Mucosa of descending colon (tissue), 3 donors: ENCODE measurements at regions of chr5 and their contacts with region 1.

Region 1: DNA sequence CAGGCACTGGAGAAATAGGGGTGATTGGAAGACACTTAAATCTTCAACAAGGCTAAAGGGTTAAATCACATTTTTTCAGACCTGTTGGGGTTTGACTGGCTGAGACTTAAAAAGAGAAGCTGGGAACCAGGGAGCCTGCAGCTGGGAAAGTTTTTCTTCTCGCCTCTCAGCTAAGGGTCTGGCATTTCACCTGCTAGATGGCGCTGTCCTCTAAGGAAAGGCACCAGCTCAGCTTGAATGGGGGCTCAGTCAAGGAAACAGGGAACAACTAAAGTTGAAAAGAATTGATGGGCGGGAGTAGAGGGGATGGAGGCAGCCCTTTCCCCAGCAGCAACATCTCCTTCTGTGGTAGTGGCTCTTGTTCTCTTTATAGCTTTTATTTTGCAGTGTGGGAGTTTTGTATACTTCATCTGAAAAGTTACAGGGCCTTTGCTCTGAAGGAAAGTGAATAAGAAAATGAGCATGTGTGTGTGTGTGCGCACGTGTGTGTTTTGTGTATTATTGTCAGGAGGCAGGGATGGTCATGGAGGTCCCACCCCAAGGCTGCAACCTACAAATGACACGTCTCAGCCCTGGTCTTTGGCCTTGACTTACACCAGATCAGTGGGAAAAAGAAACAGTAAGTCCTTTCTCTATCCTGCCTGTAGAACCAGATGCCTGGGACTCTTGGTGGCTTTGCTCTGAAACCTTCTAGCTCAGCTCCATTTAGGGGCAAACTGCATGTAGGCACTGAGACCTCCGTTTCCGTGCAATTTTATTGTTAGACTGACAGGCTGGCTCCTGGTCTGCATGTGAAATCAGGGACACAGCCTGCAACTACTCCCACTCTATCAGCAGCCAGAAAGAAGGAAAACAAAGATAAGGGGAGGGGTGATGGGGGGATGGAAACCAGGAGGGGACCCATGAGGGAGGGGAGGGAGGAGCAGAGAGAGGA is 316.2 kb upstream of the CLINT1 start:
- DNase-seq: peak in 2 of 3 donors; percentile 74 to 90
- ATAC-seq: peak; percentile 53
- H3K4me3 ChIP-seq: no peak overlapping the region
- H3K4me1 ChIP-seq: peaks cover 18% of the 10 kb centered on the region
- CTCF ChIP-seq: peak; percentile 22

Region 2: GRCh38 chr5:158511454-158511853 is 336.3 kb after region 1 on chr5:
- intact Hi-C with region 1: no loop called
- DNase-seq: no peak
- ATAC-seq: peak; percentile 66
- H3K4me3 ChIP-seq: no peak overlapping the region
- H3K4me1 ChIP-seq: no peaks in the 10 kb centered on the region
- CTCF ChIP-seq: no peak

Region 3: DNA sequence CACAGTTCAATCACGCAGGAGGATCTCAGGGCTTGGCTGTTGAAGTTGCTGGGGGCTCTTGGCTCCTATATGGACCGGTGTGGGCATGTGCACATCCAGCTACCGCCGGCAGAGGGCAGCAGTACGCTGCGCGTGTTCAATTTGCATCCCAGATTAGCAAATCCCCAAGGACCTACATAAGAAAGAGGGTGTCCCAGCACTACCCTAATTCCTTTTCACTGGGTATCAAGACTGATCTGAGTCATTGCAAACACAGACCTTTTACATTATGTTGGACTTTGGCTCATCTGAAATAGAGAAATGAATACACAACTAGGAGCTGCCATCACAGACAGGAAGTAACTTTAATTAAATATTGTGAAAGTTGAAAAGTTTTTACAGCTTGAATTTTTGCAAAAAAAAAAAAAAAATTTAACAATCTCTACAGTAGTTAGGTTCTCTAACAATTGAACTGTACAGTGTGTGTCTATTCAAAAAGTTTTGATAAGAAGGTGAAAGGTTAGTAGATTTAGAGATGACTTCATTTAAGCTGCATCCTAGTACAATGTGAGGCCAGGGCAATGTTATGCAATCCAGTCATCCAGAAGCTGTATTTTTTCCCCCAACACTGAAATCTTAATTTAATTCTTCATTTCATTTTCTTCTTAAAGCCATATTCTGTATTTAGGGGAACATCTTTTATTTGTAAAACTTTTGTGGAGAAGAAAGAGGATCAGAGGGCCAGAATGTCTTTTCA is 520.6 kb after region 1 on chr5:
- intact Hi-C with region 1: loop called in 1 of 2 experiments (anchors 10 kb)
- DNase-seq: peak; percentile 64 to 80 (median 72)
- ATAC-seq: peak; percentile 82
- H3K4me3 ChIP-seq: no peak overlapping the region
- H3K4me1 ChIP-seq: no peaks in the 10 kb centered on the region
- CTCF ChIP-seq: peak; percentile 93

Region 4: GRCh38 chr5:159106569-159107282 is 931.5 kb after region 1 on chr5:
- intact Hi-C with region 1: loop called (anchors 5 to 10 kb)
- DNase-seq: peak; percentile 73 to 83 (median 76)
- ATAC-seq: peak; percentile 82
- H3K4me3 ChIP-seq: no peak overlapping the region
- H3K4me1 ChIP-seq: no peaks in the 10 kb centered on the region
- CTCF ChIP-seq: peak; percentile 56

Region 5: DNA sequence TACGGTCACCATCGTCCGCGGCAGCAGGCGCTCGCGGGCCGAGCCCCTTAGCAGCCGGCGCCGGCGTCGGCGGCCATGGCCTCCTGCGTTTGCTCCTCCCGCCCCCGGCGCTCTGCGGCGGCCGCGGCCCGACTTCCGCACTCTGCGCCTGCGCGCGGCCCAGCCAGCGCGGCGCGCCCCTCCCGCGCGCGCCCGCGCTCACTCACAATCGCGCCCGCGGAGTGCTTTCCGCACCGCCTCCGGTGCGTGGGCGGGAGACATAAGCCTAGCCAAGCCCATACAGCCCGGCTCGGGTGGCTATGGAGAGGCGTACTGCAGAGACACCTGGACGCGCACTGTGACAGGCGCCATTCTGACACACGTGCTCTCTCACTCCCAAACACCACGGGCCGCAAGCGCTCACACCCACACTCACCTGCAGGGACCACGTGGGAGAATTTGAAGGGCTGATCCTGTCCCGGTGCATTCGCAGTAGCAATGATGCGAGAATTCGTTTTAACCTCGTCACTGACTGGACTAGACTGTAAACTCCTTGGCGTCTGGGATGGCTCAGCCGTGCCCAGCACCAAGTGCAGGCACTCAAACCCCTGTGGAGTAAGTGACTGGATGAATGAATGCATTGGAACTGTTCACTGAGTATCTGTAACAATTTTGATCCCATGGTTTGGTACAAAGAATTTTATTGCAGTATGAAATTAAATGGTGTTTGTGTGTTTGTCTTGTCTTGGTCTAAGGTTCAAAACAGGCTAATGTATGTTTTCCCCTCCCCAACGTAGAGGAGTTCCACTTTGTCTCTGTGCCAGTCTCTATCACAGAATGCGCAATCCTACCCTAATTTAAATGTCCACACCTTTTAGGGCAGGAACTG is 1034.5 kb after region 1 on chr5 and contains the start of gene RNF145:
- intact Hi-C with region 1: loop called in 1 of 2 experiments (anchors 10 kb)
- DNase-seq: peak; percentile 90 to 95 (median 92)
- ATAC-seq: peak; percentile 76
- H3K4me3 ChIP-seq: peak within 1 kb of the TSS; percentile 89
- H3K4me1 ChIP-seq: peaks cover 32% of the 10 kb centered on the region
- CTCF ChIP-seq: no peak
- total RNA-seq, gene RNF145: 50.0 to 72.6 (median 57.2) TPM